ENCODE measurements at regions of chr4 and their contacts with region 1.

Region 1: GRCh38 chr4:102620697-102621497 is 119.7 kb downstream of the NFKB1 start:
- DNase-seq: no peak
- ATAC-seq: peak; percentile 90 to 93

Region 2: DNA sequence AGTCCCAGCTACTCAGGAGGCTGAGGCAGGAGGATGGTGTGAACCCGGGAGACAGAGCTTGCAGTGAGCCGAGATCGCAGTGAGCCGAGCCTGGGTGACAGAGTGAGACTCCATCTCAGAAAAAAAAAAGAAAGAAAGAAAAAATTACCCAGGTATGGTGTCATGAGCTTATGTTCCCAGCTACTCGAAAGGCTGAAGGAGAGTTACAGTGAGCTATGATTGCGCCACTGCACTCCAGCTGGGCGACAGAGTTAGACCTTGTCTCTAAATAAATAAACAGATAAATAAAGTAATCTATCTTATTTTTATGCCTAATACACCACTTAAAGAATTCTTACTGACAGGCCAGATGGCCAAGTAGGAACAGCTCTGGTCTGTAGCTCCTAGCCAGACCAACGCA is 348.6 kb before region 1 on chr4:
- intact Hi-C with region 1: no loop called
- DNase-seq: no peak
- ATAC-seq: no peak

Region 3: GRCh38 chr4:102799816-102800215 is 178.9 kb after region 1 on chr4:
- intact Hi-C with region 1: no loop called
- DNase-seq: no peak
- ATAC-seq: no peak

Region 4: DNA sequence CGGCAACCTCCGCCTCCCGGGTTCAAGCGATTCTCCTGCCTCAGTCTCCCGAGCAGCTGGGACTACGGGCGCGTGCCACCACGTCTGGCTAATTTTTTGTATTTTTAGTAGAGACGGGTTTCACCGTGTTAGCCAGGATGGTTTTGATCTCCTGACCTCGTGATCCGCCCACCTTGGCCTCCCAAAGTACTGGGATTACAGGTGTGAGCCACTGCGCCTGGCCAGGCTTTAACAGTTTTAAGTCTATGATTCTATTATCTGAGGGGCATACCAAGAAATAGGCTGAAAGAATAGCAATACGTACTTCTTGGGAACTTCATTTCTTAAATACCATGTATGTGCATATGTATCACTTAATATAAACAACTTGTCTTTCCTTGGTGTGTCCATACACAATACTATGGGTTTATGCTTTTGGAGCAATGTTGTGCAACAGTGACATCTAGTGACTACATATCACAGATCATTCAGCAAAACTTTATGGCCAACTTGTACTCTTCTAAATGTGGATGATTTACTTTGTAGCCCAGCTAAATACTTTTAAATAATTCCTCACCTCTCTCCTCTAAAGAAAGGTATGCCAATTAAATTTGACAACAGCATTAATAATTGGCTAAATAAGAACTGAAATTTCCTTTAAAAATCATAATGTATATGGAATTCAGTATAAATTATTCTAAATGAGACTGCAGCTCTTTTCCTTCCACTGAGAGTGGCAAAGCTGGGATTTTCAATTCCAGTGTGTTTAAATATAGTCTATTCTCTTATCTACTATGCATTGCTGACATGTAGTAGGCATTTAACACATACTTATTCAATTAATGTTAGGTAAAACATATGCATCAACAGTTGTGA is 388.2 kb after region 1 on chr4:
- intact Hi-C with region 1: loop called (anchors 2 to 5 kb)
- DNase-seq: no peak
- ATAC-seq: peak; percentile 66 to 74

Region 5: DNA sequence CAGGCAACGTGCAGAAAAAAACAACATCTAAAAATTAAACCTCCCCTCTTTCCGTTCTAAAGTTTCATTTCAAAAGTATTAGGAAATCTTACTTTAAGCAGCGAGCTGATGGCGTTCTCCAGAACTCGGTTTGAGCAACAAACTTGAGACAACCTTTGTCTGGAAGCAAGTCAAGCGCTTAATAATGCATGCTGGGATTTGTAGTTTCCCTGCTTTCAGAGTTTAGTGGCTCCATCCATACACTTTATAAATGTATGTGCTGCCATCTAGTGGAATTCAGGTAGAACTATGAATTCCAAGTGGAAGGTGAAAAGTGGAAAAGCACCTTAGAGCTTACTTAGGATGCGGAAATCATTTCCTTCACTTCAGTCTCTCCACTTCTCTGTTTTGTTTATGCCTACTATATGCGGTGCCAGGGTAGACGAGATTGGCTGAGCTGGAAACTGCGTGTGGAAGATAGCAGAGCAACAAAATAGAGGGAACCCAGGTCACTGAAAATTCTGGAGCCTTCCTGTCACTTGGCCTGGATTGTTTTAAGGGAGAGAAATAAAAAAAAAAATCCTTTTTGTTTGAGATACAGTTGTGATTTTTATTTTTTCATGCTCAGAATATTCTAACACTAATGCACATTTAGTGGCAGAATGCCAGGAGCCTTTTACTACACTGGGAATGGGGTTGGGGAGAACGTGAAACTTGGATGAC is 478.9 kb after region 1 on chr4 and contains the start of gene BDH2:
- intact Hi-C with region 1: loop called (anchors 5 to 10 kb)
- DNase-seq: peak; percentile 27
- ATAC-seq: peak; percentile 97 to 98
- total RNA-seq, gene BDH2: 28.0 to 36.7 TPM